Gastrocnemius medialis (tissue), 4 donors: ENCODE measurements at regions of chr6 and their contacts with region 1.

Region 1: DNA sequence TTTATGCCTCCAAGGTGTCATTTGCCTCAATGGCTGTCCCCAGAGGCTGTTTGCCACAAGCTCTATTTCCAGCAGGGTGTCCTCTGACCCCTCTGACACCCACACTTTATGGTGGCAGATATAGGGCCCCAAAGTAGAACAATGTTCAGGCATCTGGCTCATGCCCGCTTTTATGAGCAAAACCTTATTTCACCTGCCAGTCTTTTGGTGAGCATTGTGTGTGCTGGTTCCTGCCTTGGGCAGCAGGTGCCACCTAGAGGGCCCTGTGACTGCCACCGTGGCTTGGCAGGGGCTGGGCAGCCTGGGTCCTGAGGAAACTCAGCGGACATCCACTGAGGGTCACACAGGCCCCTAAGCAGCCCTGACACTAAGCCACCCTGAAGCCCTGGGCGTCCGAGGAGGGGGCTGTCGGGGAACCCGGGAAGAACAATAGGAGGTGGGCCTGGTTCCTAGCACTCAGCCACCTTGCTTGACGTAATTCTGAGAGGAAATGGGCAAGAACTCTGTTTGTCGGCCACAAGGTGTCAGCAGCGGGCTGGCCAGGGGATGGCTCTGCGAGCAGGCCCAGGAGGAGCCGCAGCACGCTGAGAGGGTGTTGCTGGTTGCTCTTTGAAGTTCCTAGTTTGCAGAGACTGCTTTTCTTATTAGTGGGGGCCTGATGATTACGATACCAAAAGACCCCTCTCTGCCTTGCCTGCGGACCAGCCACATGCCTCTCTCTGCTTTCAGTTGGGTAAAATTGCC is 148.9 kb downstream of the SCML4 start:
- DNase-seq: peak; percentile 73 to 74
- ATAC-seq: peak; percentile 86 to 93
- H3K4me3 ChIP-seq: peak overlapping the region; percentile 34 to 47 (median 38)
- H3K27ac ChIP-seq: peak overlapping the region; percentile 61 to 82 (median 76)
- H3K4me1 ChIP-seq: peaks cover 32 to 35% of the 10 kb centered on the region in 2 donors
- H3K27me3 ChIP-seq: no peaks in the 10 kb centered on the region
- CTCF ChIP-seq: peak; percentile 80 to 93 (median 90)
- POLR2A ChIP-seq: no peak

Region 2: GRCh38 chr6:106439446-106439845 is 1235.7 kb before region 1 on chr6:
- in situ Hi-C with region 1: no loop called
- intact Hi-C with region 1: no loop called
- DNase-seq: no peak
- ATAC-seq: no peak
- H3K4me3 ChIP-seq: no peak overlapping the region
- H3K27ac ChIP-seq: no peak overlapping the region
- H3K4me1 ChIP-seq: no peaks in the 10 kb centered on the region
- H3K27me3 ChIP-seq: peaks cover 4 to 26% (median 7%) of the 10 kb centered on the region in 3 donors
- CTCF ChIP-seq: no peak
- POLR2A ChIP-seq: no peak

Region 3: DNA sequence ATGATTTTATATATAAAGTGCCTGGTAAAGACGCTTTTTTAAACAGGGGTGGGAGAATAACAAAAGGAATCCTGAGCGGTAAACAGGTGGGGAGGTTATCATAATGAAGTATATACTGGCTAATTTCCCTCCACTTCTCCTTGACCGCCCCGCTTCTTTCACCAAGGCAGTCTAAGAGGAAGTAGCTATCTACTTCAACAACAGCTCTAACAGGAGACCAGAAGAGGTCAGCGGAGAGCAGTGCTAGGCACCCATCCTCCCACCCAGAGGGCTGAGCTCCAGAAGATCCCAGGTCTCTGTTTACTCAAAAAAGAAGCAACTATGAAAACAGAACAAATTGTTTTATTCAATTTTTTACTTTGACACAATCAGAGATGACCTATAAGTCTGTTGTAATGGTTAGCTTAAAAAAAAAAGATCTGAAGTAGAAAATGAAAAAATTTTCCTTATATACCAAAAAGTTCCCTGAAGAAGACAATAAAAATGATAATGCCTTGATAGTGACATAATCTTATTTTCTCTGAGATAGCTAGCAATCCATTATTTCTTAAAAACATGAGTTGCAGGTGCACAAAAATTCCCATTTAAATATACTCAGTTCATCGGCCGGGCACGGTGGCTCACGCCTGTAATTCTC is 356.9 kb before region 1 on chr6:
- in situ Hi-C with region 1: loop called in 1 of 4 experiments (anchors 25 kb)
- intact Hi-C with region 1: loop called (anchors 1 kb)
- DNase-seq: peak; percentile 11 to 34
- ATAC-seq: peak; percentile 74 to 88
- H3K4me3 ChIP-seq: no peak overlapping the region
- H3K27ac ChIP-seq: no peak overlapping the region
- H3K4me1 ChIP-seq: peaks cover 0 to 7% of the 10 kb centered on the region in 2 donors
- H3K27me3 ChIP-seq: no peaks in the 10 kb centered on the region
- CTCF ChIP-seq: peak in 4 of 5 experiments; percentile 35 to 61 (median 42)
- POLR2A ChIP-seq: no peak

Region 4: GRCh38 chr6:107459283-107460082 is 215.7 kb before region 1 on chr6 and contains the start of gene PDSS2:
- in situ Hi-C with region 1: no loop called
- intact Hi-C with region 1: loop called (anchors 2 kb)
- DNase-seq: peak; percentile 97 to 99
- ATAC-seq: peak; percentile 94 to 98
- H3K4me3 ChIP-seq: peak within 1 kb of the TSS; percentile 79 to 89 (median 82)
- H3K27ac ChIP-seq: peak within 1 kb of the TSS; percentile 92 to 98 (median 94)
- H3K4me1 ChIP-seq: peaks cover 12 to 17% of the 10 kb centered on the region in 2 donors
- H3K27me3 ChIP-seq: no peaks in the 10 kb centered on the region
- CTCF ChIP-seq: peak in 3 of 5 experiments; percentile 7 to 35 (median 8)
- POLR2A ChIP-seq: peak; percentile 81 to 90
- total RNA-seq, gene PDSS2: 6.6 to 14.3 (median 10.0) TPM

Region 5: DNA sequence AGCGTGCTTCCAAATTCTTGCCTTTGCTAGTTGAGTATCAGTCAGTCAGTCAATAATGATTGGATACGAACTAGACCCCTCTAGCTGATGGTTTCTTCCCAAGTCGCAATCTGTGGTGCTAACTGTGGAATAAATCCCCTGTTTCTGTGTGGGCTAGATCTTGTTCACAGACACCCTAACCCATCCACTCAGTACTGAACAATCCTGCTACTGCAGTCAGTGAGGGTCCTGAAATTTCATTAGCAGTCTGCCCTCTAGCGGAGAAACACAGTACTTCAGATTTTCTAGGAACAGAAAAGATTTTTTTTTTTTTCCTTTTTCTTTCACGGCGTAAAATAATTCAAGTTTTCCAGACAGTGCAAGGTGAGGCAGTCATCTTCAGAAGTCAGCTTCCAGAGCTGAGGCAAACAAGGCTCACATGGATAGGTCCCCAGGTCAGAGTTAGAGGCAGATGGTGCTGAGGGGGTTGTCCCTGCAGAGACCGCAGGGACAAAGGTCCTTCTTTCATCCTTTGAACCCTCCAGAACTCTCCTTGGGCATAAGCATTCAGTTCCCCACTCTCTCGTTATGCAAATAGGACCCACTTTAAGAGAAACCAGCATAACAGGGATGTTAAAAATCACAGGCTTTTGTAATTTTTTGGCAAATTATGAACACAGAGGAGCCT is 29.3 kb after region 1 on chr6:
- in situ Hi-C with region 1: no loop called
- intact Hi-C with region 1: loop called (anchors 1 kb)
- DNase-seq: no peak
- ATAC-seq: peak; percentile 29 to 67
- H3K4me3 ChIP-seq: no peak overlapping the region
- H3K27ac ChIP-seq: no peak overlapping the region
- H3K4me1 ChIP-seq: no peaks in the 10 kb centered on the region
- H3K27me3 ChIP-seq: no peaks in the 10 kb centered on the region
- CTCF ChIP-seq: peak; percentile 76 to 88 (median 78)
- POLR2A ChIP-seq: no peak

Region 6: DNA sequence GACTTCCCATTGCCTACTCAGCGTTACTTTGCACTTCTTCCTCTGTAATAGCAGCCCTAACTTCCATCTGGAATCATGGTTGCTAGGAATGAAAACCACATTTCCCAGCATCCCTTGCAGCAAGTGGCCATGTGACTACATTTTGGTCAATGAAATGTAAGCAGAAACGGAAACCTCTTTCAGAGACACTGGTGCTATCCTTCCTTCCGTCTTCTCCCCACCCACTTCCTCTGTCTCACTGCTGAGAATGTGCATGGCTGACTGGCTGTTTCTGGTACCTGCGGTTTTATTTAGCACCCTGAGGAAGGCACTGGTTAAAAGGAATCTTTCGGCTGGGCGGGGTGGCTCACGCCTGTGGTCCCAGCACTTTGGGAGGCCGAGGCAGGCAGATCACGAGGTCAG is 41.5 kb after region 1 on chr6:
- in situ Hi-C with region 1: no loop called
- intact Hi-C with region 1: no loop called
- DNase-seq: no peak
- ATAC-seq: no peak
- H3K4me3 ChIP-seq: no peak overlapping the region
- H3K27ac ChIP-seq: no peak overlapping the region
- H3K4me1 ChIP-seq: peaks cover 0 to 8% of the 10 kb centered on the region in 2 donors
- H3K27me3 ChIP-seq: no peaks in the 10 kb centered on the region
- CTCF ChIP-seq: no peak
- POLR2A ChIP-seq: no peak

Region 7: GRCh38 chr6:107847844-107848802 is 173.0 kb after region 1 on chr6:
- in situ Hi-C with region 1: loop called in 3 of 4 experiments (anchors 5 to 10 kb)
- intact Hi-C with region 1: no loop called
- DNase-seq: peak; percentile 48 to 72
- ATAC-seq: peak; percentile 91 to 96
- H3K4me3 ChIP-seq: peak overlapping the region; percentile 45 to 50 (median 46)
- H3K27ac ChIP-seq: no peak overlapping the region
- H3K4me1 ChIP-seq: peaks cover 0 to 8% of the 10 kb centered on the region in 2 donors
- H3K27me3 ChIP-seq: no peaks in the 10 kb centered on the region
- CTCF ChIP-seq: peak; percentile 85 to 97 (median 93)
- POLR2A ChIP-seq: no peak